AG04449 (cell line): ENCODE measurements at regions of chr3 and their contacts with region 1.

Region 1: GRCh38 chr3:94004301-94004910 is 24.0 kb downstream of the STX19 start:
- DNase-seq: peak; percentile 58
- H3K4me3 ChIP-seq: no peak overlapping the region; the same call in 1 of the 2 replicates
- CTCF ChIP-seq: peak; percentile 66

Region 2: GRCh38 chr3:93988283-93988682 is 16.1 kb before region 1 on chr3:
- CTCF ChIA-PET with region 1: interaction called, 100 read pairs
- POLR2A ChIA-PET with region 1: no interaction called
- DNase-seq: no peak
- H3K4me3 ChIP-seq: no peak overlapping the region
- CTCF ChIP-seq: no peak

Region 3: DNA sequence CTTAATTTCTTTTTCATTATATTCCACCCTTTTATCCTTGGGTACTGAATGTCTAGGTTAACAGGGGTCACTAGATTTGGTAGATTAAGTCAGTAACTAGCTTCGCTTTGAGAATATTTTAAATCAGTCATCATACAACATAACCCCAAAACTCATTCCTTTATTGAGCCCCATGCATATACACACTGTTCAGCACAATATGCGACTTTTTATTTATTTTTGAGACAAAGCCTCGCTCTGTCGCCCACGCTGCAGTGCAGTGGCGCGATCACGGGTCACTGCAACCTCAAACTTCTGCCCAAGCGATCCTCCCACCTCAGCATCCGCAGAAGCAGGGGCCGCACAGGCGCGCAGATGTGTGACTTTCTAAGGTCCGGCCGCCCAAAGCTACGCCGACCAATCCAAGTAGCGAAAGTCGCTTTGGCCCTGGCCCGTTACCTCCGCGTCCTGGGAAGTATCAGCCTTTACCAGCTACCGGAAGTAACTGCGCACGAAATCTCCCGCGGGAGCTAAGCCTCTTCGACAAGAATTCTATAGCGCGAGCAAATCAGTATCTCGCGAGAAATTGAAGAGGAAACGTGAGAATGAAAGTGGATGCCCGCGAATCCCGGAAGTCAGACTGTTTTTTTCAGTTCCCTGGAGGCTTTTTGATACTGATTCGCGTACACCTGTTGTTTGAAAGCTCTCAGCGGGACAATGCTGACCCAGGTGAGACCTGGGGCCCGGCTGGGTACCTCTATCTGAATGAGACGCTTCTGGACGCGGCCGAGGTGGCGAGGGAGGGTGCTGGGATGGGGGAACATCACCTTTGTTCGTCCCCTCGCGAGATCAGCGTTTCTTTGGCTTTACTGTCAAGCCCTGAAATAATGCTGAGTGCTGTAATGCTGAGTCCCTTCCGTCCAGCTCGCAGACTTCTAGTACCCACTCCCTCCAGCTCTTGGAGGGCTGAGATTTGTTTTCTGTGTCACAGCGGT is 58.3 kb after region 1 on chr3 and contains the starts of genes DHFR2 and NSUN3:
- CTCF ChIA-PET with region 1: interaction called, 216 read pairs
- POLR2A ChIA-PET with region 1: no interaction called
- DNase-seq: peak; percentile 93
- H3K4me3 ChIP-seq: peak within 1 kb of the TSS; percentile 65
- CTCF ChIP-seq: no peak

Region 4: DNA sequence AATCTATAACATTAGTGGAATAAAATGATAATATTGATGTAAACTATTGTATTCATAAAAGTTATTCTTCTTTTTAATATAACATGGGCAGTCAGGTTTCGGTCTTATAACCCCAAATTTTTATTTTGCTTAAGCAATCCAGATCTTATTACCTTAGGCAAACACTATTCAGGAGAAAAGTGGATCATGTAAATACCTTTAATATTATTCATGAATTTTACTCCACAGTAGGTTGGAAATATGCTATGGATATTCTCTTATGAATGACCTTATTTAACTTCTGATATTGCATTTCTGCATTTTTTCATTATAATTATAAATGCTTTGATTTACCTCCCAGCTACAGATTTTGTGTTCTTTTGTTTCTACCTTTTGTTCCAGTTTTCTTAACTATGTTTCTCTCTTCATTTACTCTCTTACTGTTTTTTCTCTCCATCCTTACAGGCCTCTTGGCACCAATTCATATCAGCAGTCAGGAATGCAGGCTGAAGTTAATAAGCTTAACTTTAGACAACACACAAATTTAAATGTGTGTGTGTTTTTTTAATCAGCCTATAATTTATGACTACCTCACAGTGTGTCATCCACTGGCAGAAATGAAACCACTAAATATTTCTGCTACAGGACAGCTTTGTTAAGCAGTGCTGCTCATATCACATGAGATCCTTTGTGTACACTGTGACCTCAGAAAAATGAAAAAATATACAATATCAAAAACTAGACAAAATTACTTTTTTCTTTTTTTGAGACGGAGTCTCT is 169.4 kb after region 1 on chr3:
- CTCF ChIA-PET with region 1: no interaction called
- POLR2A ChIA-PET with region 1: no interaction called
- DNase-seq: no peak
- H3K4me3 ChIP-seq: no peak overlapping the region
- CTCF ChIP-seq: no peak